AG04450 (cell line): ENCODE measurements at regions of chr1 and their contacts with region 1.

Region 1: DNA sequence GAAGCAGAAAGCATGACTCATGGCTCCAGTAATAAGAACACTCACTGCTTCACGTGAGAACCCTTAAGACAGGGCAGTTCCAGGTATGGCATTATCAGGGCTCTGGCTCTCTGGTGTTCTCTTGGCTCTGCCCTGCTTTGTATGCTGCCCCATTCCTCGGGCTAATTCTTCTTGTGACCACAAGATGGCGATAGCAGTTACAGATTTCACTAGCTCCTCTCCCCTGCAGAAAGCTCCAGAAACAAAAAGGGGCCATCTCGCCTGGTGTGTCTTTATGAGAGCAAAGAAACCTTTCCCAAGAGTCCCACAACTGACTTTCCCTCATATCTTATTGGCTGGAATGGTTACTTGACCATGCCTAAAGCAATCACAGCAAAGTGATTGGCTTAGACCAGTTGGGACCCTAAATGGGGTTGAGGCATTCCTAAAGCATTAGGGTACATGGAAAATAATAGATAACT is 60.1 kb downstream of the F3 start:
- DNase-seq: peak; percentile 51
- H3K4me3 ChIP-seq: no peak overlapping the region
- H3K27ac ChIP-seq: no peak overlapping the region
- H3K27me3 ChIP-seq: no peaks in the 10 kb centered on the region
- CTCF ChIP-seq: peak; percentile 89

Region 2: GRCh38 chr1:94456736-94457135 is 24.8 kb before region 1 on chr1:
- CTCF ChIA-PET with region 1: no interaction called
- POLR2A ChIA-PET with region 1: no interaction called
- DNase-seq: no peak
- H3K4me3 ChIP-seq: no peak overlapping the region
- H3K27ac ChIP-seq: no peak overlapping the region
- H3K27me3 ChIP-seq: no peaks in the 10 kb centered on the region
- CTCF ChIP-seq: no peak

Region 3: GRCh38 chr1:94504601-94505000 is 23.1 kb after region 1 on chr1:
- CTCF ChIA-PET with region 1: interaction called, 19 read pairs
- POLR2A ChIA-PET with region 1: interaction called, 3 read pairs
- DNase-seq: no peak
- H3K4me3 ChIP-seq: no peak overlapping the region
- H3K27ac ChIP-seq: no peak overlapping the region
- H3K27me3 ChIP-seq: no peaks in the 10 kb centered on the region
- CTCF ChIP-seq: no peak

Region 4: DNA sequence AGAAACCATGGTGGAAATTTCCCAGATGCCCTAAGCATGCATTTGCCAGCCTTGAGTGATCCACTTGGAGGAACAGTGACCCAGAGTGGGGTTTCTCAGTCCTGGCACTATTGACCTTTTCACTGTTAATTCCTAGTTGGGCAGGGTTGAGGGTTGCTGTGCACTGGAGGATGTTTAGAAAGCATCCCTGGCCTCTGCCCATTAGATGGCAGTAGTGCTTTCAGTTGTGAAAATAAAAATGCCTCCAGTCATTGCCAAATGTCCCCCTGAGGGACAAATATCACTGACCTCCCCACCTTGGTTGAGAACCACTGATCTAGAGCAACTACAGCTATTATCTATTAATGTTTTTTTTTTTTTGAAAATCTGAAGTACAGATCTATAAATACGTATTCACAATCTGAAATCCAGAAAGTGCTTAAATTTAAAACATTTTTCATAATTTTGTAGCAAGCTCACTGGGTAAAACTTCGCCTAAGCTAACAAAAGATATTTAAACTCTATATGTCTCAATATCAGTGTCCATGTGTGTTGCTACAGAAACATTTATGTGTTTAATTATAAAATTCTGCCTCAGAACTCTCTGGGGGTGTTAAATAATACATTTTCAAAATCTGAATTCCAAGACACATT is 32.7 kb after region 1 on chr1:
- CTCF ChIA-PET with region 1: interaction called, 23 read pairs
- POLR2A ChIA-PET with region 1: no interaction called
- DNase-seq: no peak
- H3K4me3 ChIP-seq: no peak overlapping the region
- H3K27ac ChIP-seq: no peak overlapping the region
- H3K27me3 ChIP-seq: no peaks in the 10 kb centered on the region
- CTCF ChIP-seq: peak; percentile 81

Region 5: DNA sequence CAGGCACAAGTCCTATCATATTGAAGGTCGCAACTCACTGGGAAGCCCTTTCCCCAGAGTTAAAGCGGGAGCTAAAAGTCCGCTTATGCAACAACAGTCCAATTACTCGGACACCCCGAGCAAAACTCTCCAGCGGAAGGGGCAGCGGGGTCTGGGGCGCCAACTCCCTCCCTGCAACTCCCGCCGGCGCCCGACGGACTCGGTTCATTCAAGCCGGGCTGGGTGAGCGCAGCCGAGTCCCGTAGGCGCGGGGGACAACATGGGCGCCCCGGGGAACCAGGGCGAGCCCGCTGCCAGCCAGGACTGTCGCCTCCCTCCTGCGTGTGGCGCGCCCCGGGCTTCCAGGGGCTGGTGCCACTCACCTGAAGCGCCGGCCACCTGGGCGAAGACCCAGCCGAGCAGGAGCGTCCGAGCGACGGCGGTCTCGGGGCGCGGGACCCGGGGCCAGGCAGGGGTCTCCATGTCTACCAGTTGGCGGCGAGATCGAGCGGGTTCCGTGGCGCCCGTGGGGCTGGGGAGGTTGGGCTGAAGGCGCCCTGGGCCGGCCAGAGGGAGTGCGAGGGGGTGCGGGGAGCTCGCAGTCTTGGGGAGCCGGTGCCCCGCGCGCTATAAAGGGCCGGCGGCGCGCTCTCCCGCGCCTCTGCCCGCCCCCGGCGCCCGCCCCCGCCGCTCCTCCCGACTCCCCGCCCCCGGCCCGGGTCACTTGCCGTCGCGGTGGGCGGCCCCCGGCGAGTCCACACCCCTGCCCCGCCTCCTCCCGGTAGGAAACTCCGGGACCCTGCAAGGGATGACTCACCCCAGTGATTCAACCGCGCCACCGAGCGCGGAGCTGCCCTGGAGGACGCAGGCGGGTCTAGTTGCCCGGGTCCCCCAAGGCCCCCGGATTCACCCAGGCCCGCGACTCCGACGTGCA is 59.9 kb after region 1 on chr1 and contains the start of gene F3:
- CTCF ChIA-PET with region 1: no interaction called
- POLR2A ChIA-PET with region 1: no interaction called
- DNase-seq: no peak
- H3K4me3 ChIP-seq: peak within 1 kb of the TSS; percentile 79
- H3K27ac ChIP-seq: peak within 1 kb of the TSS; percentile 95
- H3K27me3 ChIP-seq: no peaks in the 10 kb centered on the region
- CTCF ChIP-seq: peak; percentile 25; the same call in 1 of the 2 replicates
- polyA plus RNA-seq, gene F3: 319 and 330 TPM in 2 replicates